Gastrocnemius medialis (tissue), 4 donors: ENCODE measurements at regions of chr5 and their contacts with region 1.

Region 1: DNA sequence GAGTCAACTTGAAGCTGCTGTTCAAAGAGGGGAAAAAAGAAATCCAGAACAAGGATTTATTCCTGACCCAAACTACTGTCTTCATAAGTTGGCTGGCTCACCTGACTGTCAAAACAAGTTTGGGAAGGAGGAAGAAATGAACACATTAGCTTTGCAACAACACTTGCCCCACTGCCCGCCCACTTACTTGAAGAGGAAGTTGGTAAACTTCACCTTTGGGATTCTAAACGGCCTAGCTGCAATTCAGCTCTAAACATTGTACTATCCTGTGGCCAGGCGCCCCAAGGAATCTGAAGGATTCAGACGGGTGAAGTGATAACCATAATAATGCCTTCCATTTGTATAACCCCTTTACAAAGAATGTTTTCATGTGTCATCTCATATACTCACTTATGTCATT is 199.4 kb downstream of the ARRDC3 start:
- DNase-seq: no peak
- ATAC-seq: no peak
- H3K4me3 ChIP-seq: no peak overlapping the region
- H3K27ac ChIP-seq: peak overlapping the region in 1 of 4 donors; percentile 33
- H3K4me1 ChIP-seq: peaks cover 0 to 3% of the 10 kb centered on the region in 2 donors
- H3K27me3 ChIP-seq: no peaks in the 10 kb centered on the region
- CTCF ChIP-seq: no peak
- POLR2A ChIP-seq: no peak

Region 2: DNA sequence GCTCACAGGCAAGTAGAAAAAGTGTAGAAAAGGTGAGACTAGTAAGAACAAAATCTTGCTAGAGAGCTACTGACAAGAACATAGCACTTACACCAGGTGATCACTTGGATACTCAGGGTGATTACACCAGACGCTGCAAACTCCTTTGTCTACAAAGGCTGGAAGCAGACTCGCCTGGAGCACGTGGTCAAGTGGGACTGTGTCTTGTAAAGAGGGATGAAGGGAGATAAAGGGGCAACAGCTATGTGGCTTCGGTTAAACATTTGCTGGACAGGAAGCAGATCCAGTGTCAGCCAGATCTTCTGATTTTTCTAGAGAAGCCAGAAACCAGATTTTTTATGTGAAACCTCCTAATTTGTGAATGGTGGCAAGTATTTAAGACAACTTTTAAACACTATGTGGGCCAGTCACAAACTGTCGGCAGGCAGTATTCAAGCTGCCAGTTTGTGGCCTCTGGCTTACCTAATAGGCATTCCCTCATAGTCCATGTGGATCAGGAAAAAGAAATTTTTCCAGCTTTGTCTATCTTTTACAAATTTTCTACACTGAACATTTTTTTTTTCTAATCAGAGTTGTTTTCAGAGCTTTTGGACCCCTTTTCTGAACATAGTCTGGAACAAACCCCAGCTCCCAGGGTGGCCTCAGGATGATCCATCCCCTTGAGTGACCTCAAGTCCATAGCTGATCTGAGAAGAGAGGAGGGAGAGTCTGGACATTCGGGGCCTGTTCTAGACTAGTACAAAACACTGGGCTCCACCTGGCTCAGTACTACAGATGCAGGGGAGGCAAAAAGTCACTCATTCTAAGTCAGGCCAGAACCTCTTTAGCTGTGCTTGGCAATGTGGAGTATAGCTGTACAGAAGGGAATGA is 63.5 kb before region 1 on chr5:
- in situ Hi-C with region 1: no loop called
- intact Hi-C with region 1: loop called (anchors 5 kb)
- DNase-seq: no peak
- ATAC-seq: peak; percentile 27 to 49
- H3K4me3 ChIP-seq: no peak overlapping the region
- H3K27ac ChIP-seq: peak overlapping the region in 2 of 4 donors; percentile 37 to 39
- H3K4me1 ChIP-seq: peaks cover 16% of the 10 kb centered on the region in 2 donors
- H3K27me3 ChIP-seq: no peaks in the 10 kb centered on the region
- CTCF ChIP-seq: no peak
- POLR2A ChIP-seq: no peak